ENCODE measurements at regions of chr9 and their contacts with region 1.

Region 1: GRCh38 chr9:21559424-21560280 is 77.5 kb upstream of the IFNE start:
- DNase-seq: peak; percentile 37 to 83
- ATAC-seq: peak; percentile 84 to 85
- H3K4me3 ChIP-seq: peak overlapping the region; percentile 79
- H3K27ac ChIP-seq: peak overlapping the region; percentile 94 to 98
- H3K4me1 ChIP-seq: peaks cover 13% of the 10 kb centered on the region; the same call in 2 of the 3 replicates
- CTCF ChIP-seq: no peak
- EP300 ChIP-seq: no peak; a peak in 1 of 5 replicates
- POLR2A ChIP-seq: peak; percentile 52
- RAD21 ChIP-seq: no peak; a peak in 1 of 5 replicates

Region 2: DNA sequence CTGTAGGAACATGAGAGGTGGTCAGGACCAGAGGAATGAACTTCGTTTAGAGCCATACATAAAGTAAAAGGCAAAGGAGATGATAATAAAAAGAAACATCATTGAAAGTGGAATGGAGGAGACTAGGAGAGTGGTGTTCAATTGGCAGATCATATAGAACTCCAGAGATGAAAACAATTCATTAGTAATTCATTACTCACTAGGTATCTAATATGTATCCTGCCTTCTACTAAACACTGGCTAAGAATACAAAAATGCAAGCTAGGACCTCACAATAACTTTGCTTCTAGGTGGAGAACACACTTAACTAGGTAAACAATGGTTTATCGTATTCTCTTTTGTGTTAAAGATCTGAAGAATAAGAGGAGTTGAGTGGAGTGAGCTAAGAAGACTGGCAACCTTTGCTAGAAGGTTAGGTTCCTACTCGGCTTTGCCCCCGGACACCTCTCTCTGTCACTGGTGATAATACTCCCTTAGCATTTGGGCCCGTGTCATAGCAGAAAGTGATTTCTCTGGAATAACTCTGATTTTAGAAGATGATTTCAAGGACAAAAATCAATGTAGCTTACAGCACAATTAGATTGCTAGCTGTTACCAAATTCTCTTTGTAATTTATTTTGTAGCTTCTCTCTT is 11.1 kb after region 1 on chr9:
- CTCF ChIA-PET with region 1: interaction called, 22 read pairs
- POLR2A ChIA-PET with region 1: interaction called, 31 read pairs
- DNase-seq: no peak
- ATAC-seq: peak in 1 of 2 experiments; percentile 61; a peak in 3 of 6 replicates
- H3K4me3 ChIP-seq: peak overlapping the region; percentile 26; the same call in 2 of the 3 replicates
- H3K27ac ChIP-seq: peak overlapping the region; percentile 88 to 94
- H3K4me1 ChIP-seq: peaks cover 100% of the 10 kb centered on the region
- CTCF ChIP-seq: no peak
- EP300 ChIP-seq: no peak
- POLR2A ChIP-seq: no peak
- RAD21 ChIP-seq: no peak

Region 3: DNA sequence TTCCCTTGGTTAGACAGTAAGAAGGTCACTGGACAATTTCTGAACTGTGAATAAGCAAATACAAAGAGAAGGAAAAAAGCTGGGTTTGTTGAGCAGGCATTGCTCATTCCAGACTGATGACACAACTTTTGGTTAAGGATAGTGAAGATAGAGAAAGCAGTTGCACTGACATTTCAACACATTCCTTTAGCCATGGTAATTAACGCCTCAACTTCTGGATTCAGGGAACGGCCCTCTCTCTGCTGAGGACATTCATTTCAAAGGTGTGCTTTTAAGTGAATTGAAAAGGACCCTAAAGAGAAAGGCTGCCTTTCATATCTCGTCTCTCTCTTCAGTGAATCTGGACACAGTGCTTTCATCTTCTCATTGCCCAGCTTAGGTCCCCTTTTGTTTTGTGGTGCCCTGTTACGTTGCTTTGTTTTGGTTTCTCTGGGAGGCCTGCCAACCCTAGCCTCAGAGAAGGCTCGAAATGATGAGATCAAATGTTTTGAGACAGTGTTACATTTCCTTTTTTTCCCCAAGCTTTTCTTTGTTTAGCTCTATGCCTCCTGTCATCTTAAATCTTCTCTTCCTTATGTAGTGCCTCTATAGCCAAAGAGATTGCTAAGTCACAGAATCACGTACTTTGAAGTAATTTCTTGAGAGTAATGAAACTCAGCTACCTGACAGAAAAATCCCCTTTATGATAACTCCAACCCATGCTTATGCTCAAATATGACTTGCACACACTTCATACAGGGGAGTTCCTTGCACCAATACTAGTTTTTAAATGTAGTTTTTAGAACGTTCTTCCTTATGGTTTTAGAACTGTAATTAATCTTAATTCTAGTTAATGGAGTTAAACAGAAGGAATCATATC is 16.9 kb after region 1 on chr9:
- CTCF ChIA-PET with region 1: interaction called, 22 read pairs
- POLR2A ChIA-PET with region 1: interaction called, 31 read pairs
- DNase-seq: peak in 1 of 2 experiments; percentile 80
- ATAC-seq: peak; percentile 70
- H3K4me3 ChIP-seq: peak overlapping the region; percentile 25; the same call in 2 of the 3 replicates
- H3K27ac ChIP-seq: peak overlapping the region; percentile 85 to 93
- H3K4me1 ChIP-seq: peaks cover 86% of the 10 kb centered on the region
- CTCF ChIP-seq: no peak
- EP300 ChIP-seq: peak; percentile 32 to 62; a peak in 2 of 5 replicates
- POLR2A ChIP-seq: no peak
- RAD21 ChIP-seq: peak in 1 of 2 experiments; percentile 1; a peak in 1 of 5 replicates

Region 4: DNA sequence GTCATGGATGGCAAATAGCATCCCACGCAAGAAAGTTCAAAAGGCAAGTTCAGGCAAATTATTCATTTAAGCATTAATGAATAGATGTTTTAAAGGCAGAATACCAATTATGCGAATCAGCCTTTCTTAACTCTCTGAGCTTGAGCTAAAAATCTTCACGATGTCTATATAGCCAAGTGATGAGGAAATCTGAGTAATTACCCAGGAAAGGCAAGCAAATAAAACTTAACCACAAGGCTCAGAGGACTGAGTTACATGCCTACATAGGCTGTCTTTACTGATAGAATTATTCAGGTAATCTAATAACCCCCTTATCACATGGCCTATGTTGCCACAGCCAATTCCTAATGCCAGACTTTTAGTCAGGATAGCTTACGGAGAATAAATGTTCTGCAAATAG is 122.0 kb after region 1 on chr9:
- CTCF ChIA-PET with region 1: interaction called, 3 read pairs
- POLR2A ChIA-PET with region 1: interaction called, 43 read pairs
- DNase-seq: peak in 1 of 2 experiments; percentile 81
- ATAC-seq: peak; percentile 7 to 27; a peak in 3 of 6 replicates
- H3K4me3 ChIP-seq: peak overlapping the region; percentile 13; the same call in 2 of the 3 replicates
- H3K27ac ChIP-seq: peak overlapping the region; percentile 92 to 94
- H3K4me1 ChIP-seq: peaks cover 92% of the 10 kb centered on the region
- CTCF ChIP-seq: no peak
- EP300 ChIP-seq: peak in 1 of 2 experiments; percentile 70; a peak in 2 of 5 replicates
- POLR2A ChIP-seq: no peak
- RAD21 ChIP-seq: no peak

Region 5: GRCh38 chr9:21688108-21689102 is 128.8 kb after region 1 on chr9:
- CTCF ChIA-PET with region 1: interaction called, 5 read pairs
- POLR2A ChIA-PET with region 1: interaction called, 43 read pairs
- DNase-seq: peak; percentile 51 to 87
- ATAC-seq: peak; percentile 51 to 66; a peak in 5 of 6 replicates
- H3K4me3 ChIP-seq: peak overlapping the region; percentile 31
- H3K27ac ChIP-seq: peak overlapping the region; percentile 92 to 94
- H3K4me1 ChIP-seq: peaks cover 67% of the 10 kb centered on the region
- CTCF ChIP-seq: no peak
- EP300 ChIP-seq: no peak
- POLR2A ChIP-seq: no peak
- RAD21 ChIP-seq: no peak

Region 6: DNA sequence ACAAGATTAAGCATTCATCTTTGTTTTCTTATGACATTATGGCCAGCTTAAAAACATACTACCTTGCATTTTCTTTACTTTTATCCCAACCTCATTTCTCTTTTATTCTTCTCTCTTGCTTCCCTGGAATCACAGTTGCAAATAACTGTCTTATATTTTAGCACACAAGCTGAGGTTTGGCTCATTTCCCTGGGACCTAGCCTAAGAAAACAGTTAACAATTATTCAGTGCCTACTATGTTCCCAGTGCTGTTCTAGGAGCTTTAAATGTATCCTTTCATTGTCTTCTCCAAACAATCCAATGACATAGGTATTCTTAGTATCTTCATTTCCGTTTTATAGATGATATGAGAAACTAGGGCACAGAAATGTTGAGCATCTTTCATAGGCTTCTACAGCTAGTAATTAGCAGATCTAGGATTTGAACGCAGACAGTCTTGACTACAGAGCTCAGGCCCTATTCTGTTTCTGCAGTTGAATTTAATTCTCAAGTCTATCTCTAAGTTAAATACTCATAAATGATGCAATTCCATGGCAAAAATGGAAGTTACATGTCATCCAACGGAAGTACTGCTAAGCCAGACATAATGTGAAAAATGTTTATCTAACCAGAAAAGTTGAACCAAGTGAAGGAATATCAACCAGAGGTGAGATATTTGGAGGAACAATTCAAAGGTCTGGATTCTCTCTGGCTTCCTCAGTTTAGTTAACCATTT is 190.5 kb after region 1 on chr9:
- CTCF ChIA-PET with region 1: no interaction called
- POLR2A ChIA-PET with region 1: no interaction called
- DNase-seq: no peak
- ATAC-seq: no peak
- H3K4me3 ChIP-seq: no peak overlapping the region
- H3K27ac ChIP-seq: no peak overlapping the region
- H3K4me1 ChIP-seq: no peaks in the 10 kb centered on the region
- CTCF ChIP-seq: no peak
- EP300 ChIP-seq: no peak
- POLR2A ChIP-seq: no peak
- RAD21 ChIP-seq: no peak